ENCODE measurements at regions of chr6 and their contacts with region 1.

Region 1: DNA sequence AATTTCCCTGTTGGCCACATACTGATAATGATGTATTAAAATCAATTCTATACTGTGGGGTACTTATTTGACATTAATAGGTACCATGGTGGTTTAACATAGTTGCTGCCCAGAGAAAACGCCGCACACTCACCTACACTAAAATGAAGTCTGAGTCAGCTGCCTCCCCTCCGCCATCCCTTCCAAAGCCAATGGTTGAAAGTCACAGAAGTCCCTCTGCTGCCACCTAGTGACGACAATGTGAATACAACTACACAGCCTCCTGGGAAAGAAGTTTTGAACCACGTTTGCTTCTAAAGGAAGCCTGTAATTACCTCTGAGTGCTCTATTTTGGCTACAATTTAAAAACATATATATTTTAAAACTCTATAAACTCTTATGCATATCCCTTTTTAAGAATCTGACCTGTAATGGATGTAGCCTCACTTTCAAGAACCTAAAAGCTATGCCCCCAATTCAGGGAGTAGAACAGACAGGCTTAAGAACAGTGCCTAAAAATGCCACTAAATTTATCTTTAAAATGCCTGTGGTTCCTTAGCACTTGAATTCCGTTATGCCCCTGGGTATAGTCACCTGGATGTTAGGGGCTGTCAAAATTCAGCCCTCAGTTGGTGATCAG is 20.6 kb upstream of the ECI2 start:
- DNase-seq: peak; percentile 77 to 79
- H3K4me3 ChIP-seq: no peak overlapping the region
- H3K4me3 Mint-ChIP-seq: no peak overlapping the region
- H3K27ac Mint-ChIP-seq: no peak overlapping the region
- H3K4me1 ChIP-seq: no peaks in the 10 kb centered on the region
- H3K4me1 Mint-ChIP-seq: no peaks in the 10 kb centered on the region
- H3K27me3 ChIP-seq: no peaks in the 10 kb centered on the region
- H3K27me3 Mint-ChIP-seq: peaks cover 12% of the 10 kb centered on the region
- CTCF ChIP-seq: peak; percentile 83 to 84

Region 2: DNA sequence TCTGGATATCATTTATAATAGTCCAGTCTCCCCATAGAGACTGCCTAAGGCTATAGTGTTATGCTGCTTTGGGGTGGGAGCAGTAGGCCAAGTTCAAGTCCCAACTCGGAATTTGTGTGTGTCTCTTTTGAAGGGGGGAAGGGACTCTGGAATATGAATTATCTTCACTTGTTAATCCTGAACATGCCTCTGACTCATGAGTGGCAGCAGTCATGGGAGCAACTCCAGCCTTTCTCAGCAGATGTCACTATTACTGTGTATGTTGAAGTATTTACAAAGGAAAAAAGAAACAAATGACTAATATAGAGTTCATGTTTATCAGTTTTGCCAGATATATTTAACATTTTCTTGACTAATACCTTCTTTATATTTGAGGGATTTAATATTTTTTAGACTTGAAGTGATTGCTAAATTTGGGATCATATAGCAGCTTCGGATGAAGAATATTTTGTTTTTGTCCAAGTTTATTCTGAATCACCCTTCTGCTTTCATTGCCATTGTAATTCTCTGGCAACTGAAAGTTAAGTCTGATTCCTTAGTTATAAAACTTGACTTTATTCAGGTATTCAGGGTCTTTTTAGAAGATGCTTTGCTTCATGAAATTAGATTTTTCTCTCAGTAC is 100.4 kb before region 1 on chr6:
- CTCF ChIA-PET with region 1: interaction called, 8 read pairs
- POLR2A ChIA-PET with region 1: no interaction called
- intact Hi-C with region 1: loop called (anchors 1 kb)
- DNase-seq: peak in 1 of 2 experiments; percentile 50
- H3K4me3 ChIP-seq: no peak overlapping the region
- H3K4me3 Mint-ChIP-seq: no peak overlapping the region
- H3K27ac Mint-ChIP-seq: no peak overlapping the region
- H3K4me1 ChIP-seq: no peaks in the 10 kb centered on the region
- H3K4me1 Mint-ChIP-seq: no peaks in the 10 kb centered on the region
- H3K27me3 ChIP-seq: no peaks in the 10 kb centered on the region
- H3K27me3 Mint-ChIP-seq: no peaks in the 10 kb centered on the region
- CTCF ChIP-seq: peak in 1 of 2 experiments; percentile 61

Region 3: GRCh38 chr6:4125936-4126864 is 29.8 kb before region 1 on chr6:
- CTCF ChIA-PET with region 1: interaction called, 3 read pairs
- POLR2A ChIA-PET with region 1: no interaction called
- intact Hi-C with region 1: loop called (anchors 1 kb)
- DNase-seq: peak in 1 of 2 experiments; percentile 46
- H3K4me3 ChIP-seq: no peak overlapping the region
- H3K4me3 Mint-ChIP-seq: peak overlapping the region; percentile 31
- H3K27ac Mint-ChIP-seq: peak overlapping the region; percentile 65
- H3K4me1 ChIP-seq: peaks cover 32% of the 10 kb centered on the region
- H3K4me1 Mint-ChIP-seq: peaks cover 25% of the 10 kb centered on the region
- H3K27me3 ChIP-seq: no peaks in the 10 kb centered on the region
- H3K27me3 Mint-ChIP-seq: no peaks in the 10 kb centered on the region
- CTCF ChIP-seq: peak in 1 of 2 experiments; percentile 27

Measured in Caco-2 (cell line).